HEK293T (cell line): ENCODE measurements at regions of chr1 and their contacts with region 1.

Region 1: GRCh38 chr1:25874934-25875855 is at the start of gene PAQR7:
- DNase-seq: peak; percentile 73

Region 2: DNA sequence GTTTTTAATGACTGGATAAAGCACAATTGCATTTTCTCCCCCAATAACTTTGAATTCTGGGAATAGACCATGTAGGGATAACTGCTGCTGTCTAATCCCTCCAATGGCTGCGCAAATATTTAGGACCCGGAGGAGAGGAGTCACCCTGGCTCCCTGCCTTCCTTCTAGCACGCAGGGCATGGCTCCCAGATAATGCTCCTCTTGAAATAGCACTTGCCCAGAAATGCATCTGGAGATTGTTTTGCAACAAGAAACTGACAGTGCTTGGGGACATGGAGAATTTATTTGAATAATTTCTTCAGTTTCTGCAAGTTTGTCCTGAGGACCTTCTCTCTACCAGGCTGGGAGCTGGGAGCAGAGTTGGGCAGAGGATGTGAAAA is 175.1 kb before region 1 on chr1:
- CTCF ChIA-PET with region 1: no interaction called
- POLR2A ChIA-PET with region 1: no interaction called
- DNase-seq: no peak

Region 3: DNA sequence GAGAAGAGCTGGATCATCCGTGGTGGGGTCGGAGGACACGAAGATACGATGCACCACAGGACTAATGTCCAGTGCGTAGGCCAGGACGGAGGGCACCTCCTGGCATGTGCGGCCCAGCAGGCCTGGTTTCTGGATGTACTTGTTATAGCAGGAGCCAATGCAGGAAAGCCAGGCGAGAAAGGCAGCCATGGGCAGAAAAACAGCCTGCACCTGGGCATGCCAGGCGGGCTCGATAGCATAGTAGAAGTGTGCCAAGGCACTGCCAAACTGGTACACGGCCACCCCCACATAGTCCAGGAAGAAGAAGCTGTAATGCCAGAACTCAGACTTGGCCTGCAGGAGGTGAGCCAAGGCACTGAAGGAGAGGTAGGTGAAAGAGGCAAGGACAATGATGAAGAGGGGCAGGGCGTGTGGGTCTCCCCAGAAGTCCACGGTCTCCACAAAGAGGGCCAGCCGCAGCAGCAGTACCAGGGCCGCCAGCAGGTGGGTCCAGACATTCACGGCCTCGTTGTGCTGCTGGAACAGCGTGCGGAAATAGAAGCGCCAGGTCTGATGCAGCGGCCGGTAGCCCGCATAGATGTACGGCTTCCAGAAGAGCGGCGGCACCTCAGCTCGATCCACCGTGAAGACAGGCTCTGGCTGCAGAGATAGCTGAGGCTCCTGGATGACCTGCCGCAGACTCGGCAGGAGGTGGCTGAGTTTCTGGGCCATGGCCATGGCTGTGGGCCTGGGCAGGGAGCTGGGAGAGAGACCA is 11.9 kb before region 1 on chr1:
- CTCF ChIA-PET with region 1: no interaction called
- POLR2A ChIA-PET with region 1: interaction called, 11 read pairs
- DNase-seq: no peak

Region 4: GRCh38 chr1:25904943-25905679 is 29.9 kb after region 1 on chr1:
- CTCF ChIA-PET with region 1: no interaction called
- POLR2A ChIA-PET with region 1: no interaction called
- DNase-seq: peak; percentile 96